Endothelial cell of umbilical vein (primary cell): ENCODE measurements at regions of chr1 and their contacts with region 1.

Region 1: GRCh38 chr1:19251305-19252196 is at the starts of genes EMC1 and MRTO4:
- DNase-seq: peak; percentile 89
- H3K4me3 ChIP-seq: peak within 1 kb of the TSS; percentile 59 to 81 (median 78)
- H3K27ac ChIP-seq: peak within 1 kb of the TSS; percentile 54
- H3K4me1 ChIP-seq: peaks cover 18% of the 10 kb centered on the region
- H3K27me3 ChIP-seq: no peaks in the 10 kb centered on the region
- CTCF ChIP-seq: no peak
- POLR2A ChIP-seq: peak; percentile 91
- total RNA-seq, gene EMC1: 77.5 and 84.8 TPM in 2 replicates
- total RNA-seq, gene MRTO4: 47.7 and 49.4 TPM in 2 replicates

Region 2: GRCh38 chr1:19199969-19200604 is 51.5 kb before region 1 on chr1:
- CTCF ChIA-PET with region 1: no interaction called
- POLR2A ChIA-PET with region 1: no interaction called
- dilution Hi-C with region 1: no loop called
- intact Hi-C with region 1: no loop called
- DNase-seq: no peak
- H3K4me3 ChIP-seq: no peak overlapping the region
- H3K27ac ChIP-seq: no peak overlapping the region
- H3K4me1 ChIP-seq: peaks cover 18% of the 10 kb centered on the region
- H3K27me3 ChIP-seq: no peaks in the 10 kb centered on the region
- CTCF ChIP-seq: no peak
- POLR2A ChIP-seq: no peak

Region 3: DNA sequence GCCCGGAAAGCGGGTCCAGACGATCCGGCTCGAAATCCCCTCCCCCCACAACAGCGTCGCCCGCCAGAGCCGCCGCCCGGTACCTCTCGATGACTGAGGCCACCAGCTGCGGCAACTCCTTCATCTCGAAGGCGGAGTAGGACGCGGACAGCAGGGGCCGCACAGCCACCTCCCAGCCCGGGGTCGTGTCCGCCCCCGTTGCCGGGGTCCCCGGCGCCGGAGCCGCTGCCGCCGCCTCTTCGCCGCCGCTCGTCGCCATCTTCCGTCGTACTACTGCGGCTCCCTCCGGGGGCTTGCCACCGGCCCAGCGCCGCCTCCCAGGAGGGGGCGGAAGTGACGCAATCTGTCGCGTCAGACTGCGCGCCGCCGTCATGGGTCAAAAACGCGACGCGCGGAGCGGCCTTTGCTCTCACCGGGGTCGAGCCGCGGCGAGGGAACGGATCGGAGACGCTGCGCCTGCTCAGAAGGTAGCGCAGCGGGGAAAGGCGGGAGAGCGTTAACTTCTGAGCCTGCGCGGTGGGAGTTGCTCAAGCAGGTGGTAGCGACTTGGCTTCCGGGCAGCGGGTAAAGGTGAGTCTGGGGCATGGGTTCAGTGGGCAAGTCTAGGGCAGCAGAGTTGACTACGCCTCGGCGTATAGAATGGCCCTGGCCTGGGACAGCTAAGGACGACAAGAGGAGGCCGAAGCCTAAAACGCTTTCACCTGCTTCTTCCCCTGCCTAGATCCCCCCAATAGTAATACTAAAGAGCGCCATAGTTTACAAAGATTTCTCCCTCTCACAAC is 41.4 kb before region 1 on chr1 and contains the start of gene UBR4:
- CTCF ChIA-PET with region 1: no interaction called
- POLR2A ChIA-PET with region 1: no interaction called
- dilution Hi-C with region 1: no loop called
- intact Hi-C with region 1: loop called (anchors 2 kb)
- DNase-seq: peak; percentile 96
- H3K4me3 ChIP-seq: peak within 1 kb of the TSS; percentile 26 to 94 (median 81)
- H3K27ac ChIP-seq: peak within 1 kb of the TSS; percentile 80
- H3K4me1 ChIP-seq: peaks cover 22% of the 10 kb centered on the region
- H3K27me3 ChIP-seq: no peaks in the 10 kb centered on the region
- CTCF ChIP-seq: no peak
- POLR2A ChIP-seq: peak; percentile 52
- total RNA-seq, gene UBR4: 146 and 150 TPM in 2 replicates

Region 4: GRCh38 chr1:19311959-19312781 is 60.6 kb after region 1 on chr1 and contains the starts of genes AKR7A2 and SLC66A1:
- CTCF ChIA-PET with region 1: interaction called, 7 read pairs
- POLR2A ChIA-PET with region 1: no interaction called
- dilution Hi-C with region 1: no loop called
- intact Hi-C with region 1: loop called (anchors 1 kb)
- DNase-seq: peak; percentile 96
- H3K4me3 ChIP-seq: peak within 1 kb of the TSS; percentile 57 to 87 (median 69)
- H3K27ac ChIP-seq: peak within 1 kb of the TSS; percentile 84
- H3K4me1 ChIP-seq: peaks cover 21% of the 10 kb centered on the region
- H3K27me3 ChIP-seq: no peaks in the 10 kb centered on the region
- CTCF ChIP-seq: peak in 1 of 2 donors; percentile 3
- POLR2A ChIP-seq: peak; percentile 91
- total RNA-seq, gene AKR7A2: 45.2 and 48.0 TPM in 2 replicates
- total RNA-seq, gene SLC66A1: 15.3 and 17.6 TPM in 2 replicates

Region 5: GRCh38 chr1:19596714-19597495 is 345.4 kb after region 1 on chr1:
- CTCF ChIA-PET with region 1: no interaction called
- POLR2A ChIA-PET with region 1: no interaction called
- dilution Hi-C with region 1: no loop called
- intact Hi-C with region 1: loop called (anchors 10 kb)
- DNase-seq: peak; percentile 97
- H3K4me3 ChIP-seq: peak overlapping the region; percentile 73 to 98 (median 91)
- H3K27ac ChIP-seq: peak overlapping the region; percentile 96
- H3K4me1 ChIP-seq: peaks cover 12% of the 10 kb centered on the region
- H3K27me3 ChIP-seq: peaks cover 2% of the 10 kb centered on the region in 2 experiments
- CTCF ChIP-seq: no peak
- POLR2A ChIP-seq: peak; percentile 70